ENCODE measurements at regions of chr9 and their contacts with region 1.

Region 1: GRCh38 chr9:9790216-9790872 is 822.5 kb downstream of the PTPRD start:
- DNase-seq: no peak
- H3K4me3 ChIP-seq: no peak overlapping the region
- H3K4me3 Mint-ChIP-seq: no peak overlapping the region
- H3K27ac ChIP-seq: no peak overlapping the region
- H3K27ac Mint-ChIP-seq: no peak overlapping the region
- H3K4me1 ChIP-seq: no peaks in the 10 kb centered on the region
- H3K4me1 Mint-ChIP-seq: no peaks in the 10 kb centered on the region
- H3K27me3 ChIP-seq: no peaks in the 10 kb centered on the region
- H3K27me3 Mint-ChIP-seq: no peaks in the 10 kb centered on the region

Region 2: DNA sequence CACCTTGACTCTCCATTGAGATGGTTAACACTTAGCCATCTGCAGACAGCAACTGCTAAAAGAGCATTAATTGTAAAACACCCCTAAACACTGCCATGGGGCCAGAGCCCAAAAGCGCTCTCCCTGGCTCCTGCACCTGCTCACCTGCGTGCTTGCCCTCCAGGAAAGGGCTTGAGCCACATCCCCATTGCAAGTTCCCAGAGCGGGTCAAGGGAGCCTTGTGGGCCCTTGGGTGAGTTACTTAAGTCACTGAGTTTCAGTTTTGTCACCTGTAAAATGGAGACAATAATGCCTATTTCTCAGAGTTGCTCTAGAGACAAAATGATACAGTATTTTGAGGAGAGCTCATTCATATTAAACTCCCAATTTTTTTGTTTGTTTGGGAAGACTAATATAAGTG is 145.3 kb before region 1 on chr9:
- CTCF ChIA-PET with region 1: no interaction called
- POLR2A ChIA-PET with region 1: no interaction called
- intact Hi-C with region 1: no loop called
- DNase-seq: no peak
- H3K4me3 ChIP-seq: no peak overlapping the region
- H3K4me3 Mint-ChIP-seq: no peak overlapping the region
- H3K27ac ChIP-seq: no peak overlapping the region
- H3K27ac Mint-ChIP-seq: no peak overlapping the region
- H3K4me1 ChIP-seq: no peaks in the 10 kb centered on the region
- H3K4me1 Mint-ChIP-seq: no peaks in the 10 kb centered on the region
- H3K27me3 ChIP-seq: no peaks in the 10 kb centered on the region
- H3K27me3 Mint-ChIP-seq: no peaks in the 10 kb centered on the region

Region 3: GRCh38 chr9:9719373-9720112 is 70.8 kb before region 1 on chr9:
- CTCF ChIA-PET with region 1: no interaction called
- POLR2A ChIA-PET with region 1: no interaction called
- intact Hi-C with region 1: loop called (anchors 10 kb)
- DNase-seq: no peak
- H3K4me3 ChIP-seq: no peak overlapping the region
- H3K4me3 Mint-ChIP-seq: no peak overlapping the region
- H3K27ac ChIP-seq: no peak overlapping the region
- H3K27ac Mint-ChIP-seq: no peak overlapping the region
- H3K4me1 ChIP-seq: no peaks in the 10 kb centered on the region
- H3K4me1 Mint-ChIP-seq: no peaks in the 10 kb centered on the region
- H3K27me3 ChIP-seq: no peaks in the 10 kb centered on the region
- H3K27me3 Mint-ChIP-seq: no peaks in the 10 kb centered on the region

Region 4: DNA sequence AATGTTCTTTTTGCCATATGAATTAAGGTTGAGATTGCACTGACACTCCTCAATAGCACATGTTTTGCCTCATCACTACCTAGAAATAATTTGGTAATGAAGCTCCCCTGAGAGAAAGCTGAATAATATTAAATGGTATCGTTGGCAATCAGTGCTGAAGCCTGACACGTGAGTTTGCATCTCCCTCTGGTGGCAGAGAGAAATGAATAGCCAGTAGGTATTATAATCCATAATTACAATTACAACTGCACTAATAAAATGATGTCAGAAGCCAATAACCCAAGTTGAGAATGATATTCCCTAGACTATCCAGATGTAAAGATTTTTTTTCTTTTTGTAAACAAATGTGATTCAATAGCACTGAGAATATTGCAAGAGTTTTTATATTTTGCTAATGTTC is 122.1 kb after region 1 on chr9:
- CTCF ChIA-PET with region 1: no interaction called
- POLR2A ChIA-PET with region 1: no interaction called
- intact Hi-C with region 1: no loop called
- DNase-seq: no peak
- H3K4me3 ChIP-seq: no peak overlapping the region
- H3K4me3 Mint-ChIP-seq: no peak overlapping the region
- H3K27ac ChIP-seq: no peak overlapping the region
- H3K27ac Mint-ChIP-seq: no peak overlapping the region
- H3K4me1 ChIP-seq: no peaks in the 10 kb centered on the region
- H3K4me1 Mint-ChIP-seq: no peaks in the 10 kb centered on the region
- H3K27me3 ChIP-seq: no peaks in the 10 kb centered on the region
- H3K27me3 Mint-ChIP-seq: no peaks in the 10 kb centered on the region